ENCODE measurements at regions of chr19 and their contacts with region 1.

Region 1: GRCh38 chr19:14031719-14032480 is at the start of gene IL27RA:
- DNase-seq: peak; percentile 64 to 94 (median 87)
- ATAC-seq: peak; percentile 75
- H3K4me3 ChIP-seq: peak within 1 kb of the TSS; percentile 60 to 97
- H3K4me3 Mint-ChIP-seq: peak within 1 kb of the TSS; percentile 92
- H3K27ac ChIP-seq: peak within 1 kb of the TSS; percentile 80 to 95
- H3K27ac Mint-ChIP-seq: peak within 1 kb of the TSS; percentile 94
- H3K4me1 ChIP-seq: peaks cover 26% of the 10 kb centered on the region
- H3K4me1 Mint-ChIP-seq: peaks cover 32% of the 10 kb centered on the region
- H3K27me3 ChIP-seq: no peaks in the 10 kb centered on the region
- H3K27me3 Mint-ChIP-seq: no peaks in the 10 kb centered on the region
- CTCF ChIP-seq: peak; percentile 50
- total RNA-seq, gene IL27RA: 25.4 to 25.7 TPM

Region 2: DNA sequence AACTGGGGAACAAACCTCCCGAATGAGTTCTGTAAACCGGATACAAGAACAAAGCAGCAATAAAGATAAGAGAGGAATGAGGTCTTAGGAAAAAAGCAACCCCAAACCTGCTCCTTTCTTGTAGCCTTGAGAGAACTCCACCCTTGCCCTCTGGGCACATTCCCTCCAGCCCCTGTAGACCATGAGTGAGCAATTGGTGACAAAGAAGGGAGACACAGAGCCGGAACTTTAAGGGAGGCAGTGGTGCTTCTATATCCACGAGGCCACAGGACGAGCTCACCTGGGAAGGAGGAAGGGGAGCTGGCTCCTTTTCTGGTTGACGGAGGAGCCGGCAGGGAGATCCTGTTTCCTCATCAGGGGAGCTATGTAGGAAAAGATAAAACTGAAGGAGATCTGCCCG is 139.0 kb before region 1 on chr19:
- CTCF ChIA-PET with region 1: no interaction called
- POLR2A ChIA-PET with region 1: no interaction called
- intact Hi-C with region 1: no loop called
- DNase-seq: no peak
- ATAC-seq: no peak
- H3K4me3 ChIP-seq: no peak overlapping the region
- H3K4me3 Mint-ChIP-seq: no peak overlapping the region
- H3K27ac ChIP-seq: no peak overlapping the region
- H3K27ac Mint-ChIP-seq: no peak overlapping the region
- H3K4me1 ChIP-seq: no peaks in the 10 kb centered on the region
- H3K4me1 Mint-ChIP-seq: no peaks in the 10 kb centered on the region
- H3K27me3 ChIP-seq: no peaks in the 10 kb centered on the region
- H3K27me3 Mint-ChIP-seq: no peaks in the 10 kb centered on the region
- CTCF ChIP-seq: no peak

Region 3: GRCh38 chr19:13952154-13953035 is 79.5 kb before region 1 on chr19 and contains the start of gene DCAF15:
- CTCF ChIA-PET with region 1: interaction called, 3 read pairs
- POLR2A ChIA-PET with region 1: interaction called, 25 read pairs
- intact Hi-C with region 1: loop called (anchors 1 kb)
- DNase-seq: peak; percentile 96 to 100 (median 99)
- ATAC-seq: peak; percentile 96
- H3K4me3 ChIP-seq: peak within 1 kb of the TSS; percentile 63 to 73
- H3K4me3 Mint-ChIP-seq: peak within 1 kb of the TSS; percentile 96
- H3K27ac ChIP-seq: peak within 1 kb of the TSS; percentile 76 to 78
- H3K27ac Mint-ChIP-seq: peak within 1 kb of the TSS; percentile 92
- H3K4me1 ChIP-seq: peaks cover 14% of the 10 kb centered on the region
- H3K4me1 Mint-ChIP-seq: peaks cover 21% of the 10 kb centered on the region
- H3K27me3 ChIP-seq: no peaks in the 10 kb centered on the region
- H3K27me3 Mint-ChIP-seq: no peaks in the 10 kb centered on the region
- CTCF ChIP-seq: no peak
- total RNA-seq, gene DCAF15: 86.5 to 101 TPM

Region 4: GRCh38 chr19:13986348-13986904 is 45.5 kb before region 1 on chr19:
- CTCF ChIA-PET with region 1: interaction called, 4 read pairs
- POLR2A ChIA-PET with region 1: interaction called, 14 read pairs
- intact Hi-C with region 1: loop called in 1 of 2 experiments (anchors 1 kb)
- DNase-seq: peak; percentile 96 to 100 (median 99)
- ATAC-seq: peak; percentile 88
- H3K4me3 ChIP-seq: peak overlapping the region; percentile 24 to 59
- H3K4me3 Mint-ChIP-seq: peak overlapping the region; percentile 61
- H3K27ac ChIP-seq: peak overlapping the region; percentile 93 to 96
- H3K27ac Mint-ChIP-seq: peak overlapping the region; percentile 96
- H3K4me1 ChIP-seq: peaks cover 86% of the 10 kb centered on the region
- H3K4me1 Mint-ChIP-seq: peaks cover 86% of the 10 kb centered on the region
- H3K27me3 ChIP-seq: no peaks in the 10 kb centered on the region
- H3K27me3 Mint-ChIP-seq: no peaks in the 10 kb centered on the region
- CTCF ChIP-seq: no peak

Region 5: GRCh38 chr19:14073261-14073924 is 41.5 kb after region 1 on chr19:
- CTCF ChIA-PET with region 1: interaction called, 17 read pairs
- POLR2A ChIA-PET with region 1: interaction called, 5 read pairs
- intact Hi-C with region 1: loop called (anchors 1 to 2 kb)
- DNase-seq: peak; percentile 55 to 89 (median 76)
- ATAC-seq: peak; percentile 74
- H3K4me3 ChIP-seq: peak overlapping the region; percentile 69 to 86
- H3K4me3 Mint-ChIP-seq: peak overlapping the region; percentile 90
- H3K27ac ChIP-seq: peak overlapping the region; percentile 42 to 65
- H3K27ac Mint-ChIP-seq: peak overlapping the region; percentile 90
- H3K4me1 ChIP-seq: peaks cover 30% of the 10 kb centered on the region
- H3K4me1 Mint-ChIP-seq: peaks cover 10% of the 10 kb centered on the region
- H3K27me3 ChIP-seq: peaks cover 0 to 2% of the 10 kb centered on the region in 2 experiments
- H3K27me3 Mint-ChIP-seq: no peaks in the 10 kb centered on the region
- CTCF ChIP-seq: no peak

Region 6: GRCh38 chr19:14107581-14108461 is 75.9 kb after region 1 on chr19:
- CTCF ChIA-PET with region 1: no interaction called
- POLR2A ChIA-PET with region 1: no interaction called
- intact Hi-C with region 1: no loop called
- DNase-seq: no peak
- ATAC-seq: no peak
- H3K4me3 ChIP-seq: no peak overlapping the region
- H3K4me3 Mint-ChIP-seq: no peak overlapping the region
- H3K27ac ChIP-seq: no peak overlapping the region
- H3K27ac Mint-ChIP-seq: no peak overlapping the region
- H3K4me1 ChIP-seq: peaks cover 7% of the 10 kb centered on the region
- H3K4me1 Mint-ChIP-seq: peaks cover 15% of the 10 kb centered on the region
- H3K27me3 ChIP-seq: no peaks in the 10 kb centered on the region
- H3K27me3 Mint-ChIP-seq: no peaks in the 10 kb centered on the region
- CTCF ChIP-seq: no peak

Region 7: GRCh38 chr19:14160017-14160703 is 128.3 kb after region 1 on chr19:
- CTCF ChIA-PET with region 1: no interaction called
- POLR2A ChIA-PET with region 1: no interaction called
- intact Hi-C with region 1: no loop called
- DNase-seq: no peak
- ATAC-seq: no peak
- H3K4me3 ChIP-seq: no peak overlapping the region
- H3K4me3 Mint-ChIP-seq: no peak overlapping the region
- H3K27ac ChIP-seq: no peak overlapping the region
- H3K27ac Mint-ChIP-seq: no peak overlapping the region
- H3K4me1 ChIP-seq: peaks cover 2% of the 10 kb centered on the region
- H3K4me1 Mint-ChIP-seq: no peaks in the 10 kb centered on the region
- H3K27me3 ChIP-seq: no peaks in the 10 kb centered on the region
- H3K27me3 Mint-ChIP-seq: no peaks in the 10 kb centered on the region
- CTCF ChIP-seq: no peak

Region 8: GRCh38 chr19:14203177-14203576 is 171.3 kb after region 1 on chr19:
- CTCF ChIA-PET with region 1: no interaction called
- POLR2A ChIA-PET with region 1: no interaction called
- intact Hi-C with region 1: no loop called
- DNase-seq: peak in 2 of 9 experiments; percentile 14 to 41
- ATAC-seq: no peak
- H3K4me3 ChIP-seq: no peak overlapping the region
- H3K4me3 Mint-ChIP-seq: no peak overlapping the region
- H3K27ac ChIP-seq: no peak overlapping the region
- H3K27ac Mint-ChIP-seq: no peak overlapping the region
- H3K4me1 ChIP-seq: peaks cover 12% of the 10 kb centered on the region
- H3K4me1 Mint-ChIP-seq: peaks cover 37% of the 10 kb centered on the region
- H3K27me3 ChIP-seq: no peaks in the 10 kb centered on the region
- H3K27me3 Mint-ChIP-seq: no peaks in the 10 kb centered on the region
- CTCF ChIP-seq: no peak